Lower leg skin (tissue), 4 donors: ENCODE measurements at regions of chr3 and their contacts with region 1.

Region 1: DNA sequence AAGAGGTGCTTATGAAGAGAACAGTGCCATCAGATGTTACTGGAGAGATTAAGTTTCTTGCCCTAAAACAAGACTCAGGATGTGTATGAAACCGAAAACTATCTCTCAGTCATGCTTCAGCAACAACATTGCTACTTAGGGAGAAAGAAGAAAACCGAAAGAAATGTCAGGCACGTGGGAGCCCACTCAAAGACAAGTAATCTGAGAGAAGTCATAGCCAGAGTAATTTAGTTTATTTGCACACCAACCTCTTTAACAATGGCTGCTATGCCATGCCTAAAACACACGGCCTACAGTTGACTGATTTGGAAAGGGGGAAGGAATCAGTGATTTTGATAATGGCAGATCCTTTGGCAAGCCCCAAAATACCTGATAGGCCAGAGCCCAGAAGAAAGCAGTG is 162.9 kb downstream of the TIGIT start:
- DNase-seq: no peak
- H3K4me3 ChIP-seq: no peak overlapping the region
- CTCF ChIP-seq: no peak
- POLR2A ChIP-seq: no peak

Region 2: GRCh38 chr3:113668015-113668414 is 788.7 kb before region 1 on chr3:
- intact Hi-C with region 1: no loop called
- DNase-seq: no peak
- H3K4me3 ChIP-seq: no peak overlapping the region
- CTCF ChIP-seq: no peak
- POLR2A ChIP-seq: no peak

Region 3: DNA sequence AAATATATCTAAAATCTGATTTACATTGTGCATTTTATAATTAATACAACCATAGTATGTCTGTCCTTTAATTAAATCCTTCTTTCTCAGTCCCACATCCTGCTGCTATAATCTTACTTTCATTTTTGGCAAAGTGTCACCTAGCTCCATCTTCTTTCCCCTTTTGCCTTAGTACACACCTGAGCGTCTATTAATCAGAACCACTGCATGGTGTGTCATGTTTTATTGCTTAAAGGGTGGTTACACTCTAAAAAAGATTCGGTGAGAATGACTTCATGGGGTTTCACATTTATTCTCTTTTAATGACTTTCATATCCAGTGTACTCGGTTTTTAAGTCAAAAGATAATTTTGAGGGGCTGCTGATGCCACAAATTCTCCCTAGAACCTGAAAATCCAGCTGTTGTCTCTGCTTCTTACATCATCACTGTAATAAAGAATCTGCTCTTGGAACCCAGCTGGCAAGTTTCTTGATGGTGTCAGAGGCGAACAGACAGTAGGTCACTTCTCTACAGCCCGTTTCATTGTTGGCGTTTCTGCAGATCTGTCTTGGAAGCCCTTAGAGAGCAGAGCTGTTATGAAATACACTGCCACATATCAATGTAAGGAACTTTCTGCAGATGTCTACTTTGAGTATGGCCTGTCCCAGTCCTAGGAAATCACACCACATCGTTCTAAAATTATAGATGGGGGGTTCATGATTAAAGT is 63.2 kb before region 1 on chr3:
- intact Hi-C with region 1: loop called (anchors 2 kb)
- DNase-seq: no peak
- H3K4me3 ChIP-seq: no peak overlapping the region
- CTCF ChIP-seq: no peak
- POLR2A ChIP-seq: no peak